ENCODE measurements at regions of chr1 and their contacts with region 1.

Region 1: GRCh38 chr1:241677201-241677600 is 25.1 kb downstream of the WDR64 start:
- DNase-seq: peak; percentile 32
- H3K4me3 Mint-ChIP-seq: peak overlapping the region; percentile 43
- H3K27ac Mint-ChIP-seq: peak overlapping the region; percentile 35
- H3K4me1 Mint-ChIP-seq: peaks cover 19% of the 10 kb centered on the region
- H3K27me3 Mint-ChIP-seq: peaks cover 5% of the 10 kb centered on the region

Region 2: GRCh38 chr1:241716915-241717656 is 39.9 kb after region 1 on chr1:
- intact Hi-C with region 1: loop called (anchors 1 kb)
- DNase-seq: no peak
- H3K4me3 Mint-ChIP-seq: no peak overlapping the region
- H3K27ac Mint-ChIP-seq: no peak overlapping the region
- H3K4me1 Mint-ChIP-seq: no peaks in the 10 kb centered on the region
- H3K27me3 Mint-ChIP-seq: peaks cover 3% of the 10 kb centered on the region